K562 (cell line): ENCODE measurements at regions of chr2 and their contacts with region 1.

Region 1: DNA sequence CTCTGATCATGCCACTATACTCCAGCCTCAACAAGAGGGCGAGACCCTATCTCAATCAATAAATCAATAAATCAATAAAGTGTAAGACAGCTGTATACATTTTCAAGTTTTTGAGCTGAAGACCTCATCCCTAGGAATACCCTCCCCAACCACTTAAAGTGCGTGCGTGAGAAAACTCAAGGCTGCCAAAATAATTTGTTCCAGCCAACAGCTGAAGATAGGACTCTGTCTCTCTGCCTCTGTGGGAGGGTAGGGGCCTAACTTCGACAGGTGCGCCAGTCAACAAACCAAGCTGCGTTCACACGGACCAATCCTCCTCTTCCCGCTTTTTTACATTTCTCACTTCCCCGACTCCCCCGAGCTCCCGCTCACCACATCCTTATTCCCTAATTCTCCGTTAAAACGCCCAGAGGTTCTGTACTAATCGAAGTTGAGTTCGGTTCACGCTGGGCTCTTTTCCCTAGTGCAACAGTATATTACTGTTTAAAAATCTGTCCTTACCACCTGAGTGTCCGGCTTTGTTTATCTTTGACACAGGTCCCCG is 618 bp downstream of the POLR2D start:
- DNase-seq: peak in 2 of 4 experiments; percentile 34 to 43
- ATAC-seq: peak; percentile 31
- H3K4me3 ChIP-seq: peak overlapping the region; percentile 70
- H3K27ac ChIP-seq: peak overlapping the region; percentile 85
- H3K4me1 ChIP-seq: peaks cover 28 to 29% of the 10 kb centered on the region in 2 experiments
- H3K27me3 ChIP-seq: no peaks in the 10 kb centered on the region
- CTCF ChIP-seq: no peak
- EP300 ChIP-seq: no peak
- POLR2A ChIP-seq: no peak
- RAD21 ChIP-seq: no peak

Region 2: GRCh38 chr2:128027801-128028667 is 170.7 kb after region 1 on chr2 and contains the start of gene SAP130:
- CTCF ChIA-PET with region 1: no interaction called
- POLR2A ChIA-PET with region 1: no interaction called
- in situ Hi-C with region 1: no loop called
- intact Hi-C with region 1: loop called (anchors 5 kb)
- DNase-seq: peak; percentile 91 to 97 (median 94)
- ATAC-seq: peak; percentile 90
- H3K4me3 ChIP-seq: peak within 1 kb of the TSS; percentile 97
- H3K27ac ChIP-seq: peak within 1 kb of the TSS; percentile 94
- H3K4me1 ChIP-seq: peaks cover 12 to 16% of the 10 kb centered on the region in 2 experiments; a peak in 4 of 5 replicates
- H3K27me3 ChIP-seq: no peaks in the 10 kb centered on the region
- CTCF ChIP-seq: no peak
- EP300 ChIP-seq: no peak
- POLR2A ChIP-seq: peak; percentile 85
- RAD21 ChIP-seq: no peak
- polyA plus RNA-seq, gene SAP130: 5.8 to 7.3 TPM

Region 3: DNA sequence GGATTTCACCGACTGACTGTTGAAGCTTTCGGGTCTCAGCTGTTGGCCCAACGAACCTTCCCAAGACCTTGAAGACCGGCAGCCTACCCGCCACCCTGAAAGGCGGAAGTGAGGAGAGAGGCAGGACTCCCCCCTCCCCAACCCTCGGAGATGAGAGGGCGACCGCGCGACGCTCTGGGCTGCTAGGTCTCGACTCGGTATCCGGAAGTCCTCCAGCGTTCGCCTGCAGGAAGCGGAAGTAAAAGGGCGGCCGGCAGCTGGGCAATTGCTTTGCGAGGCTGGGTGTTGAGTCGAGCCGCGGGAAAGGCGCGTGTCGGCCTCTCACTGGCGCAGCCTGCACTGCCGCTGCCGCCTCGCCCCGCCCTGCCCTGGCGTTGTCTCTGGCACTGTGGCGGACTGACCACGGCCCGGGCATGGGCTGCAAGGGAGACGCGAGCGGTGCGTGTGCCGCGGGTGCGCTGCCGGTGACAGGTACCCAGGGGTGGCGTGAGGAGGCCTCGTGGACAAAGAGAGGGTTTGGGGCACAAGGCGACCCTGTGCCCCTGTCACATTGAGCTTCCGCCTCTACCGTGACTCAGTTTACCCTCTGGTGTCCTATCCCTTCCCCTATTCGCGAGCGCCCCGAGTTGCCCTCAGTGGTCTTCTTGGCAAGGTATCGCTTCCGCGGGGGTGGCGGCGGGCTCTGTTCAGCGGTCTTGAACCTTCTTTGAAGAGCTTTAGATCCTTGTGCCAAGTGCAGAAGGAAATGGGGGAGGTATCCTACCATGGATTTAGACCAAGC is 233.8 kb after region 1 on chr2 and contains the start of gene UGGT1:
- CTCF ChIA-PET with region 1: no interaction called
- POLR2A ChIA-PET with region 1: no interaction called
- in situ Hi-C with region 1: no loop called
- intact Hi-C with region 1: loop called (anchors 5 kb)
- DNase-seq: peak; percentile 90 to 98 (median 93)
- ATAC-seq: peak; percentile 95
- H3K4me3 ChIP-seq: peak within 1 kb of the TSS; percentile 89
- H3K27ac ChIP-seq: peak within 1 kb of the TSS; percentile 92
- H3K4me1 ChIP-seq: peaks cover 16 to 20% of the 10 kb centered on the region in 2 experiments; a peak in 4 of 5 replicates
- H3K27me3 ChIP-seq: no peaks in the 10 kb centered on the region
- CTCF ChIP-seq: no peak
- EP300 ChIP-seq: no peak; the same call in 1 of the 2 replicates
- POLR2A ChIP-seq: peak; percentile 94
- RAD21 ChIP-seq: no peak
- polyA plus RNA-seq, gene UGGT1: 5.1 to 7.1 TPM